T-cell (primary cell): ENCODE measurements at regions of chr16 and their contacts with region 1.

Region 1: DNA sequence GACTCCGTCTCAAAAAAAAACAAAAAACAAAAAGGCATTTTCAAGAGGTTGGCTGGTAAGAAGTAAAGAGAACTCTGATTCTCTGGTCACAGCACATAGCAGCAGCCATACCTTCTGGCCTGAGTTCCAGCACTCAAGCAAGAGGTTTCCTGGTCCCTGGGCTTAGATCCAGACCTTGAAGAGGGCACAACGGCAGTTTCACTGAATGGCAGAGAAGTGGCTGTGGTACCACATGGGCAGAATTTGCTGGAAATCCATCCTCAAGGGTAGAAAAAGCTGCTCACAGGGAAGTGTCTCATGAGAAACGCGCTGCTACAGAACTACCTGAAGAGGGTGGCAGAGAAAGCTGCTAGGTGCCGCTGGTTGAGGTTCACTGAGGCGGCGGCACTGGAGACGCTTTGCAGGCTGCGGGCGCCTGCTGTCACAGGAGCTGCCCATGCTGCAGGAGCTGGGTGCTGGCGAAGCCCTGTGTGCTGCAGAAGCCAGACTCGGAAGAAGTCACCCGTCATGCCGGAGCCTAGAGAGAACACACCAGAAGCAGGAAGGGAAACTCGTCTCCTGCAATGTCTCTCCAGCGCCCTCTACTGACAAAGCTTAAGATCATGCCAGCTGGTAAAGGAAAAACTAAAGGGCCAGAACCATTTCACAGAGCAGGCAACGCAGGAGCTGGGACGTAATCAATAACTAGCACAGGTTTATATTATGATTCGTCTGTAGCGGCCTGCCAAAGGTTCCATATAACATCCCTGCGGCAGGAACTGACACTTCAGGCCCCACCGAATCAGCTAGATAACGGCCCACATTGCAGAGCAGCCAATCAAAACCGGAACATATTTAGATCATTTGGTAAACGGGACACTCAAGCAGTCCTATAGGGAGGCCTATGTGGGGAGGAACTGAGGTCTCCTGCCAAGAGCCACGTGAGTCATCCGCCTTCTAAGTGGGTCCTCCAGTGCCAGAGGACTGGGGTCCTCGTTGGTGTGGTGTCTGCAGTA is 5.4 kb upstream of the ZNF213 start:
- DNase-seq: peak; percentile 59 to 95 (median 77)
- ATAC-seq: peak; percentile 73 to 77 (median 74)
- H3K4me3 ChIP-seq: peak overlapping the region; percentile 75 to 90
- H3K4me3 Mint-ChIP-seq: peak overlapping the region; percentile 87 to 90 (median 89)
- H3K27ac ChIP-seq: peak overlapping the region; percentile 1
- H3K27ac Mint-ChIP-seq: peak overlapping the region; percentile 93
- H3K4me1 ChIP-seq: peaks cover 25 to 61% of the 10 kb centered on the region in 2 experiments
- H3K4me1 Mint-ChIP-seq: peaks cover 62 to 66% (median 63%) of the 10 kb centered on the region in 3 donors
- H3K27me3 ChIP-seq: no peaks in the 10 kb centered on the region
- H3K27me3 Mint-ChIP-seq: no peaks in the 10 kb centered on the region

Region 2: DNA sequence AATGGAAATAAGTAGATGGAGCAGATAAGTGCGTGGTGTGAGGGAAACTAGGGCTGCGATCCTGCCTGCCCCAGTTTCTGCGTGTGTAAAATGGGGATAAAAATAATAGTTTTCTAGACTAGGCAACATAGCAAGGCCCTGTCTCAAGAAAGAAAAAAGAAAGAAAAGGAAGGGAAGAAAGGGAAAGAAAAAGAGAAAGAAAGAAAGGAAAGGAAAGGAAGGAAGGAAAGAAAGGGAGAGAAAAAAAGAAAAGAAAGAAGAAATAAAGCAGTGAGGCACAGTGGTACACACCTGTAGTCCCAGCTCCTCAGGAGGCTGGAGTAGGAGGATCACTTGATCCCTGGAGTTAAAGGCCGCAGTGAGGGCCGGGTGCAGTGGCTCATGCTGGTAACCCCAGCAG is 147.0 kb before region 1 on chr16:
- CTCF ChIA-PET with region 1: interaction called in 1 of 2 experiments, 10 read pairs
- POLR2A ChIA-PET with region 1: no interaction called
- DNase-seq: no peak
- ATAC-seq: no peak
- H3K4me3 ChIP-seq: no peak overlapping the region
- H3K4me3 Mint-ChIP-seq: peak overlapping the region in 2 of 3 donors; percentile 24 to 74
- H3K27ac ChIP-seq: no peak overlapping the region
- H3K27ac Mint-ChIP-seq: no peak overlapping the region
- H3K4me1 ChIP-seq: peaks cover 2 to 27% of the 10 kb centered on the region in 2 experiments
- H3K4me1 Mint-ChIP-seq: peaks cover 10 to 15% (median 15%) of the 10 kb centered on the region in 3 donors
- H3K27me3 ChIP-seq: peaks cover 0 to 44% of the 10 kb centered on the region in 2 experiments
- H3K27me3 Mint-ChIP-seq: no peaks in the 10 kb centered on the region

Region 3: GRCh38 chr16:3027945-3028712 is 101.3 kb before region 1 on chr16:
- CTCF ChIA-PET with region 1: interaction called, 3 to 28 read pairs
- POLR2A ChIA-PET with region 1: no interaction called
- DNase-seq: peak; percentile 64 to 94 (median 80)
- ATAC-seq: peak; percentile 46 to 53 (median 48)
- H3K4me3 ChIP-seq: no peak overlapping the region
- H3K4me3 Mint-ChIP-seq: peak overlapping the region in 1 of 3 donors; percentile 74
- H3K27ac ChIP-seq: no peak overlapping the region
- H3K27ac Mint-ChIP-seq: no peak overlapping the region
- H3K4me1 ChIP-seq: peaks cover 8 to 51% of the 10 kb centered on the region in 2 experiments
- H3K4me1 Mint-ChIP-seq: peaks cover 31 to 38% (median 37%) of the 10 kb centered on the region in 3 donors
- H3K27me3 ChIP-seq: peaks cover 7 to 46% of the 10 kb centered on the region in 2 experiments
- H3K27me3 Mint-ChIP-seq: peaks cover 22 to 28% of the 10 kb centered on the region in 2 donors

Region 4: GRCh38 chr16:3059000-3059722 is 70.3 kb before region 1 on chr16:
- CTCF ChIA-PET with region 1: interaction called, 6 to 39 read pairs
- POLR2A ChIA-PET with region 1: interaction called, 3 to 7 read pairs
- DNase-seq: peak; percentile 59 to 94 (median 80)
- ATAC-seq: peak; percentile 85 to 90 (median 88)
- H3K4me3 ChIP-seq: peak overlapping the region; percentile 80 to 91
- H3K4me3 Mint-ChIP-seq: peak overlapping the region; percentile 83 to 88 (median 87)
- H3K27ac ChIP-seq: peak overlapping the region; percentile 74
- H3K27ac Mint-ChIP-seq: peak overlapping the region; percentile 91 to 93
- H3K4me1 ChIP-seq: peaks cover 13 to 61% of the 10 kb centered on the region in 2 experiments
- H3K4me1 Mint-ChIP-seq: peaks cover 47 to 69% (median 54%) of the 10 kb centered on the region in 3 donors
- H3K27me3 ChIP-seq: no peaks in the 10 kb centered on the region
- H3K27me3 Mint-ChIP-seq: no peaks in the 10 kb centered on the region

Region 5: GRCh38 chr16:3158471-3159314 is 29.3 kb after region 1 on chr16:
- CTCF ChIA-PET with region 1: interaction called in 1 of 2 experiments, 13 read pairs
- POLR2A ChIA-PET with region 1: no interaction called
- DNase-seq: peak; percentile 86 to 97 (median 94)
- ATAC-seq: peak; percentile 89 to 93 (median 92)
- H3K4me3 ChIP-seq: peak overlapping the region; percentile 57 to 75
- H3K4me3 Mint-ChIP-seq: peak overlapping the region; percentile 87 to 96 (median 91)
- H3K27ac ChIP-seq: peak overlapping the region; percentile 69
- H3K27ac Mint-ChIP-seq: peak overlapping the region; percentile 92 to 94
- H3K4me1 ChIP-seq: peaks cover 12 to 30% of the 10 kb centered on the region in 2 experiments
- H3K4me1 Mint-ChIP-seq: peaks cover 22 to 31% (median 24%) of the 10 kb centered on the region in 3 donors
- H3K27me3 ChIP-seq: peaks cover 0 to 7% of the 10 kb centered on the region in 2 experiments
- H3K27me3 Mint-ChIP-seq: no peaks in the 10 kb centered on the region